ENCODE measurements at regions of chr1 and their contacts with region 1.

Region 1: DNA sequence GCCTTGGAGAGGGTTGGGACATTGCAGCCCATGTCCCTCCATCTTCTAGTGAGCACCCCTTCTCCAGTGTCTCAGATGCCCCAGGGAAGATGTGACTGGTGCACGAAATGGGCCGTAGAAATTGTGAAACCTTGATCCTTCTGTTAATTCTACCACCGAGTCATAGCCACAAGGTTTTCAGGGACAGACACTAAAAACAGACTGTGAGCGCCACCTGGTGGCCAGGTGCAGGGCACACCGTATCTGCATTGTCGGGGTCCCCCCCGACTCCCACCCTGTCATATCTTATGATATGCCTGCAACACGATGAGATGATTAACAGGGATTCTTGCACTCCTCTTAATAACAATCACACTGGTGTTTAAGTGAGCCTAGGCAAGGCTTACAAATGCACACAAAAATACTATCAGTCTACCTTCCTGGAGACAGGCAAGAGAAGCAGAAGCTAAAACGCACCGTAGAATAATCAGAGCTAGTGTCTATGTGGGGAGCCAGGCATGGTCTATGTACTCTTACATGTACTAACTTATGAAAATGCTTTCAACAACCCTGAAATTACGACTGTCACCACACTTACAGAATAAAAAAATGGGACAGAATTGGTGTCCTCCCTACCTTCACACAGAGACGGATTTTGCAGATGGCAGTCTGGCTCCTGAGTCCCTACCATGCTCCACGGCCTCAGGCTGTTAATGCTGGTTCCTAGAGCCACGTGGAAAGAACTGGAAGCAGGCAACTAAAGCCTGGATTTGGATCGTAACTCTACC is 57.9 kb downstream of the FHAD1 start:
- DNase-seq: peak; percentile 84
- H3K4me3 Mint-ChIP-seq: no peak overlapping the region
- H3K27ac Mint-ChIP-seq: no peak overlapping the region
- H3K4me1 Mint-ChIP-seq: no peaks in the 10 kb centered on the region
- H3K27me3 Mint-ChIP-seq: peaks cover 2% of the 10 kb centered on the region

Region 2: DNA sequence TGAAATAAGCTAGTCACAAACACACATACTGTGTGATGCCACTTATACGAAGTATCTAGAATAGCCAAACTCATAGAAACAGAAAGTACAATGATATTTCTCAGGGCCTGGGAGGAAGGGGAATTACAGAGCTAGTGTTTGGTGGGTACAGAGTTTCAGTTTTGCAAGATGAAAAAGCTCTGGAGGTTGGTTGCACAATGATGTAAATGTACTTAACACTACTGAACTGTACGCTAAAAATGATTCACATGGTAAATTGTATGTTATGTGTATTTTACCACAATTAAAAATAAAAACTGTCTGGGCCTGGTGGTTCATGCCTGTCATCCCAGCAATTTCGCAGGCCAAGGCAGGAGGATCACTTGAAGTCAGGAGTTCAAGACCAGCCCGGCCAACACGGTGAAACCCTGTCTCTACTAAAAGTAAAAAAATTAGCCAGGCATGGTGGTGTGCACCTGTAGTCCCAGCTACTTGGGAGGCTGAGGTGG is 73.1 kb before region 1 on chr1:
- CTCF ChIA-PET with region 1: interaction called, 11 read pairs
- intact Hi-C with region 1: no loop called
- DNase-seq: peak; percentile 50
- H3K4me3 Mint-ChIP-seq: no peak overlapping the region
- H3K27ac Mint-ChIP-seq: no peak overlapping the region
- H3K4me1 Mint-ChIP-seq: peaks cover 21% of the 10 kb centered on the region
- H3K27me3 Mint-ChIP-seq: peaks cover 7% of the 10 kb centered on the region

Region 3: GRCh38 chr1:15288173-15288926 is 16.5 kb before region 1 on chr1:
- CTCF ChIA-PET with region 1: interaction called, 13 read pairs
- intact Hi-C with region 1: no loop called
- DNase-seq: no peak
- H3K4me3 Mint-ChIP-seq: no peak overlapping the region
- H3K27ac Mint-ChIP-seq: no peak overlapping the region
- H3K4me1 Mint-ChIP-seq: peaks cover 8% of the 10 kb centered on the region
- H3K27me3 Mint-ChIP-seq: no peaks in the 10 kb centered on the region

Region 4: GRCh38 chr1:15370781-15371520 is 66.1 kb after region 1 on chr1:
- CTCF ChIA-PET with region 1: no interaction called
- intact Hi-C with region 1: no loop called
- DNase-seq: no peak
- H3K4me3 Mint-ChIP-seq: no peak overlapping the region
- H3K27ac Mint-ChIP-seq: no peak overlapping the region
- H3K4me1 Mint-ChIP-seq: no peaks in the 10 kb centered on the region
- H3K27me3 Mint-ChIP-seq: no peaks in the 10 kb centered on the region

Measured in activated naive CD4-positive, alpha-beta T cell treated with anti-CD3 and anti-CD28 coated beads for 36 hours (primary cell).